Endothelial cell of umbilical vein (primary cell): ENCODE measurements at regions of chr1 and their contacts with region 1.

Region 1: GRCh38 chr1:210262167-210262896 is 29.7 kb downstream of the SERTAD4 start:
- DNase-seq: peak; percentile 88
- H3K4me3 ChIP-seq: no peak overlapping the region
- H3K27ac ChIP-seq: no peak overlapping the region
- H3K4me1 ChIP-seq: peaks cover 6% of the 10 kb centered on the region
- H3K27me3 ChIP-seq: peaks cover 12 to 21% of the 10 kb centered on the region in 2 experiments
- CTCF ChIP-seq: no peak
- POLR2A ChIP-seq: no peak

Region 2: GRCh38 chr1:209911746-209912145 is 350.6 kb before region 1 on chr1:
- CTCF ChIA-PET with region 1: no interaction called
- POLR2A ChIA-PET with region 1: no interaction called
- dilution Hi-C with region 1: no loop called
- intact Hi-C with region 1: no loop called
- DNase-seq: no peak
- H3K4me3 ChIP-seq: no peak overlapping the region
- H3K27ac ChIP-seq: no peak overlapping the region
- H3K4me1 ChIP-seq: no peaks in the 10 kb centered on the region
- H3K27me3 ChIP-seq: no peaks in the 10 kb centered on the region
- CTCF ChIP-seq: no peak
- POLR2A ChIP-seq: no peak

Region 3: DNA sequence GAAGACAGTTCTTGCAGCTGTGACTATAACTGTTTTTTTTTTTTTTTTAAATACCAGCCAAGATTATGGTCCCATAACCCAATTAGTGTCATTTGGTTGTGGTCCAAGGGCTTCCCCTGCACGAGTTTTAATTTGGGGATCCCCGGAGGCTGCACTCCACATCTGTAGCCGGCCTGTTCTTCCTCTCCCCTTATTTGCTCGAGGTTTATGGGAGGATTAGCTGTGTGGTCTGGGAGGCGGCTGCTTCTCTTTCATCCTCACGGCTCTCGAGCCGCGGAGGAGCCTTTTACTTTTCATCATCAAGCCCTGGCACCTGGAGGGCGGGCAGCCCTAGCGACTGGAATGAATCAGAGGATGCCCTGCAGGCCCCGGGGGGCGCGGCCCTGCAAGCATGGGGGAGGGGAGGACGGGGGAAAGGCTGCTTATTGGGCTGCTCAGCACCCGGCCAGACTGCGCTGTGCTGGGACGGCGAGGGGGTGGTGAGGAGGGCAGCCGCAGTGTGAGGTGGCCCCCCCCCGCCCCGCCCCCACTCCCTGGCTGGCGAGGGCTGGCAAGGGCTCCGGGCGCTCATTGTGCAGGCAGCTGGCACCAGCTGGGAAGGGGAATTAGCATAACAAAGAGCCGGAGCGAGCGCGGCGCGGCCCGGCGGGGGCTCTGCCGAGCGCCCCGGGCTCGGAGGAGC is 11.2 kb before region 1 on chr1:
- CTCF ChIA-PET with region 1: interaction called, 12 read pairs
- POLR2A ChIA-PET with region 1: no interaction called
- dilution Hi-C with region 1: no loop called
- intact Hi-C with region 1: no loop called
- DNase-seq: peak; percentile 72
- H3K4me3 ChIP-seq: peak overlapping the region; percentile 34 to 57 (median 37)
- H3K27ac ChIP-seq: peak overlapping the region; percentile 39
- H3K4me1 ChIP-seq: peaks cover 20% of the 10 kb centered on the region
- H3K27me3 ChIP-seq: peaks cover 0 to 8% of the 10 kb centered on the region in 2 experiments
- CTCF ChIP-seq: no peak
- POLR2A ChIP-seq: no peak